Naive thymus-derived CD4-positive, alpha-beta T cell (primary cell): ENCODE measurements at regions of chr12 and their contacts with region 1.

Region 1: DNA sequence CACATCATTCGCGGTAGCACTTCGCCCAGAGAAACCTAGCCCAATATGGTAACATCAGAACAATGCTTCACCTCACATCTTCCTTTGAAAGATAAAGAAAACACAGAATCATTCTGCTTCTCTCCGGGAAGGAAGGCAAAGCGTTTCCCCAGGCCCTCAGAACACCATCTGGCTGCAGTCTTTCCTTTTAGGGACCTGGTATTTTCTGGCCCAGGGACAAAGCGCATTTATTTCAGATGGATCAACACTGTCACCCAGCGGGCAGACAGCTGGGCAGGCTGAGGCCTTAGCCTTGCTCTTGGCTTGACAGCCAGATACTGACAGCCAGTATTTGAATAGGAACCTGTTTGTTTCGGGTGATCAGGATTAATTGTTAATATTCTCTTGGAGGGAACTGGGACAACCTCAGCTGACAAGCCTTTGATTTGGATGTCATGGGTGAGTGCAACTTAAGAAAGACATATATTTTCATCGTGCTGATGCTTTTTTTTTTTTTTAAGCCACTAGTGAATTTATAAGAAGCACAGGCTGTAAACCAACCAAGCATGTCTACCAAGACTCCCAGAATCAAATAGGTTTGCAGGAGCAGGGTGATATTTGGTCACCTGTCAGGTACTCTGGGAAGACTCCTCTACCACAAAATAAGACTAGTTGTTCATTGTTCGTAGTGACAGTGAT is 118.9 kb downstream of the VEZT start:
- DNase-seq: no peak
- ATAC-seq: no peak
- H3K4me3 ChIP-seq: no peak overlapping the region
- H3K4me3 Mint-ChIP-seq: no peak overlapping the region
- H3K27ac ChIP-seq: no peak overlapping the region
- H3K27ac Mint-ChIP-seq: peak overlapping the region in 3 of 9 donors; percentile 31 to 52 (median 48)
- H3K4me1 ChIP-seq: no peaks in the 10 kb centered on the region
- H3K4me1 Mint-ChIP-seq: peaks cover 0 to 9% (median 5%) of the 10 kb centered on the region in 7 donors
- H3K27me3 ChIP-seq: no peaks in the 10 kb centered on the region
- H3K27me3 Mint-ChIP-seq: peaks cover 0 to 2% (median 0%) of the 10 kb centered on the region in 5 donors

Region 2: GRCh38 chr12:95304673-95305198 is 31.8 kb before region 1 on chr12:
- CTCF ChIA-PET with region 1: no interaction called
- POLR2A ChIA-PET with region 1: no interaction called
- intact Hi-C with region 1: loop called in 1 of 2 experiments (anchors 2 kb)
- DNase-seq: no peak
- ATAC-seq: no peak
- H3K4me3 ChIP-seq: no peak overlapping the region
- H3K4me3 Mint-ChIP-seq: no peak overlapping the region
- H3K27ac ChIP-seq: no peak overlapping the region
- H3K27ac Mint-ChIP-seq: peak overlapping the region in 1 of 9 donors; percentile 29
- H3K4me1 ChIP-seq: no peaks in the 10 kb centered on the region
- H3K4me1 Mint-ChIP-seq: no peaks in the 10 kb centered on the region
- H3K27me3 ChIP-seq: no peaks in the 10 kb centered on the region
- H3K27me3 Mint-ChIP-seq: no peaks in the 10 kb centered on the region